ENCODE measurements at regions of chr18 and their contacts with region 1.

Region 1: DNA sequence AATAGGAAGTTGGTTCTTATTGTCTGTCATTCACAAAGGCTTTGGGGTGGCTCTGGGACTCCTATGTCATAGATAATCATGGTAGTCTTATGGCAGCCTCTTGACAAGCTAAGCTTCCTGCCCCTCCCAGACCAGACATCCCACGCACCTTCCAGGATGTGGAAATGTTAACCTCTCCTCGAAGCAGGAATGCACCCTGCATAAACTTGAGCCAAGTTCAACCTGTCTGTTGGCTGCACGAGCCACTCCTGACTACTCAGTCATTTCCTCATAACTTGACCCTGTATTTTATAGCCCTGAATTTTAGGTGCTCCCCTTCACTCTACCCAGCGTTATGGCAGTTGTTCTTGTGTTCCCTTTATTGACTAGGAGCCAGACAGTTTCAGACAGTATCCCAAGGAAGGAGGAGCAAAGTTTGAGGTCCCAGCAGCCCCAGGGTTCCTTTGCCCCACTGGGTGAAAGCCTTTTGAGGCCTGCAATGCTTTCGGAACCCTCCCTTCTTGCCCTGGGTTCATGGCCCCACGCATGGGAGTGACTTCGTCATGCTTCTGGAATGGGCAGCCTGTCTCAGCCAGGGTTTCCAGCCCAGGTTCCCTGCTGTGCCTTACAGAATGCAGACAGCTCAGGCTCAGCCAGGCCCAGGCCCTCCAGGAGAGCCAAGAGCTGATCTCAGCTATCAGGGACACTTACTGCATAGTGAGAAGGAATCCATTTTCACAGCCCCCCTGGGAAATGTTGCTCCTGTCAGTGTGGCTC is 15.6 kb upstream of the INO80C start:
- DNase-seq: no peak
- ATAC-seq: no peak
- H3K4me3 ChIP-seq: no peak overlapping the region
- H3K27ac ChIP-seq: no peak overlapping the region
- H3K4me1 ChIP-seq: no peaks in the 10 kb centered on the region
- H3K27me3 ChIP-seq: no peaks in the 10 kb centered on the region
- CTCF ChIP-seq: no peak
- POLR2A ChIP-seq: no peak

Region 2: GRCh38 chr18:35127201-35127600 is 386.2 kb before region 1 on chr18:
- intact Hi-C with region 1: no loop called
- DNase-seq: no peak
- ATAC-seq: no peak
- H3K4me3 ChIP-seq: no peak overlapping the region
- H3K27ac ChIP-seq: no peak overlapping the region
- H3K4me1 ChIP-seq: peaks cover 0 to 16% (median under 1%) of the 10 kb centered on the region in 4 donors
- H3K27me3 ChIP-seq: no peaks in the 10 kb centered on the region
- CTCF ChIP-seq: no peak
- POLR2A ChIP-seq: no peak

Region 3: DNA sequence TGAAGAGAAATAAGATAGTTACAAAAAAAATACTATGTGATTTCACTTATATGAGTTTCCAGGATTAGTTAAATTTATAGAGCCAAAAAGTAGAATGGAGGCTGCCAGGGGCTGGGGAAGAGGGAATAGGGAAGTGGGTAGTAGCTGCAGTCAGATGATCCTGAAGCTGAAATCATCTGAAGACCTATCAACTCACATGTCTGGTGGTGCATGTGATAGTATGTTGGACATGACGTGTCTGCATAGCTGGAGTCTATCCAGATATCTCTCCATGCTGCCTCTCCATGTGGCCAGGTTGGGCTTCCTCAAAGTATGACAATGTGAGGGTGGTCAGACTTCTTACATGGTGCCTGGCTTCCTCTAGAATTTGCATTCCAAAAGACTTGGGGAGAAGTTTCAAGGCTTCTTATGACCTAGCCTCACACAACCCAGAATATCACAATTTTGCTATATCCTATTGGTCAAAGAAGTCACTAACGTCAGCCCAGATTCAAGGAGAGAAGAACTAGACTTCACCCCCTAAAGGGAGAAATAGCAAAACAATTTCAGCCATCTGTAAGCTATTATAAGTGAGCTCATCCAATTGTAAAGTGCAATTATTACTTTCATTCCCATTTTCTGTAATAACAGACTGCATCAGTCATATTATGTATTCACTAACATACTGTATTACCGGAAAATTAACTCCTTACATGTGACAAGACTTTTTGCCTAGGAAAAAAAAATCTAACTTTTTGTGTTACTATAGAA is 122.2 kb before region 1 on chr18:
- intact Hi-C with region 1: loop called in 1 of 2 experiments (anchors 10 kb)
- DNase-seq: no peak
- ATAC-seq: peak in 1 of 4 donors; percentile 18
- H3K4me3 ChIP-seq: no peak overlapping the region
- H3K27ac ChIP-seq: no peak overlapping the region
- H3K4me1 ChIP-seq: no peaks in the 10 kb centered on the region
- H3K27me3 ChIP-seq: no peaks in the 10 kb centered on the region
- CTCF ChIP-seq: no peak
- POLR2A ChIP-seq: no peak

Region 4: DNA sequence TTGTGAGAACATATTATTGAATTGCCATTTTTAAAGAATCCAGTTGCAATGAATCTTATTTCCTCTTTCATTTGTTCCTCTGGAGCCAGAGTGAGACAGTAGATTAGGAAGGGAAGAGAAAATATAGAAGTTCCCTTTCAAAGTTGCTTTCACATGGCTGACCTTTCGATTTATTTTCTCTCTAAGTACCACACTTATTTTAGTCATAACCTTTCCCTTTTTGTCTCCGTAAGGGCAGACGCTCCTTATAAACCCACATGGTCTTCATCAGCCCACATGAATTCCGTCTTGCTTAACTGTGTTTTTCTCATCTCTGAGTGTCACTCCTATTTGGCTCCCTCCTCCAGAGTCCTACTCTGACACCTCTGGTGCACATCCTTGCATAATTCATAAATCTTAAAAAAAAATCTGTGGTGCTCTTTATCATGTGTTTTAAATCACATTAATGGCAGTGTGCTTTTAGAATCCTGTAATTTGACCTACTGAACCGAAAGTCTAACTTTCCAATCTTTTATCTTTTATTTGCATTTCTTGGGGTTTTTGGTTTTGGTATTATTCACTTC is 97.8 kb before region 1 on chr18:
- intact Hi-C with region 1: loop called in 1 of 2 experiments (anchors 10 kb)
- DNase-seq: no peak
- ATAC-seq: peak in 2 of 4 donors; percentile 60 to 61
- H3K4me3 ChIP-seq: no peak overlapping the region
- H3K27ac ChIP-seq: no peak overlapping the region
- H3K4me1 ChIP-seq: no peaks in the 10 kb centered on the region
- H3K27me3 ChIP-seq: no peaks in the 10 kb centered on the region
- CTCF ChIP-seq: no peak
- POLR2A ChIP-seq: no peak

Measured in right lobe of liver (tissue), 6 donors.